ENCODE measurements at regions of chr19 and their contacts with region 1.

Region 1: DNA sequence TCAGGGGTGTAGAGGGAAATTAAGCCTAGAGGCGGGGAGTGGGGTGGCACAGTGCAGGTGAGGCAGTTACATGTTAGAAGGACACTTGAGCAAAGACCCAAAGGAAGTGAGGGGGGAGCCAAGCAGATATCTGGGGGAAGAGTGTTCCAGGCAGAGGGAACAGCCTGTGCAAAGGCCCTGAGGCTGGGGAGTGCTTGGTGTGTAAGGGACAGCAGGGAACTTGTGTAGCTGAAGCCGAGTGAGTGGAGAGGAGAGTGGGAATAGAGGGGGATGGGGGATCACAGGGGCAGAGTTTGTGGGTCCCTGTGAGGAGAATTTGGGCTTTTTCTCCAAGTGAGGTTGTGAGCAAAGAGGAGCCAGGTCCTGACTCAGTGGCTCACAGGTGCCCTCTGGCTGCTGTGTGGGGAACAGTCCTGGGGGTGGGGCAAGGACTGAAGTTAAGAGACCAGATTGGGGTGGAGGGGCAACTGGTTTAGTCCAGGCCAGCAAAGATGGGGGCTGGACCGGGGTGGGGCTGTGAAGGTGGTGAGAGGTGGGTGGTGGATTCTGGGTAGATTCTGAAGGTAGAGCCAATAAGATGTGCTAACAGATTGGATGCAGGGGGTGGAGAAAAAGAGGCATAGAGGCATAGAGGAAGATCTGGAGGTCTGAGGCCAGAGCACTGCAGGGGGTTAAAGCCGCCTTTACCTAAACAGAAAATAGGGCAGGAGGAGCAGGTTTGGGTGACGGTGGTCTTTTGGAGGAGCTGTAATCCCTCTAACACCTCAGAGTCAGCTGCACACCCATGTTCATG is 75.3 kb downstream of the CACNA1A start:
- DNase-seq: peak; percentile 51
- ATAC-seq: peak; percentile 93
- H3K4me3 ChIP-seq: no peak overlapping the region
- H3K27ac ChIP-seq: no peak overlapping the region
- H3K4me1 ChIP-seq: no peaks in the 10 kb centered on the region; a peak in 1 of 4 replicates
- H3K27me3 ChIP-seq: no peaks in the 10 kb centered on the region
- CTCF ChIP-seq: peak; percentile 84 to 96 (median 93)
- POLR2A ChIP-seq: no peak
- RAD21 ChIP-seq: peak; percentile 88

Region 2: GRCh38 chr19:13366529-13367143 is 64.3 kb before region 1 on chr19:
- CTCF ChIA-PET with region 1: interaction called, 3 read pairs
- POLR2A ChIA-PET with region 1: no interaction called
- RAD21 ChIA-PET with region 1: no interaction called
- intact Hi-C with region 1: loop called (anchors 1 kb)
- DNase-seq: peak; percentile 51
- ATAC-seq: peak; percentile 87
- H3K4me3 ChIP-seq: no peak overlapping the region
- H3K27ac ChIP-seq: no peak overlapping the region
- H3K4me1 ChIP-seq: peaks cover 0 to 6% of the 10 kb centered on the region in 2 experiments; a peak in 1 of 4 replicates
- H3K27me3 ChIP-seq: no peaks in the 10 kb centered on the region
- CTCF ChIP-seq: peak; percentile 64 to 93 (median 75)
- POLR2A ChIP-seq: no peak
- RAD21 ChIP-seq: peak; percentile 95

Region 3: GRCh38 chr19:13451434-13451995 is 20.5 kb after region 1 on chr19:
- CTCF ChIA-PET with region 1: no interaction called
- POLR2A ChIA-PET with region 1: no interaction called
- RAD21 ChIA-PET with region 1: no interaction called
- intact Hi-C with region 1: no loop called
- DNase-seq: no peak
- ATAC-seq: no peak
- H3K4me3 ChIP-seq: no peak overlapping the region
- H3K27ac ChIP-seq: no peak overlapping the region
- H3K4me1 ChIP-seq: no peaks in the 10 kb centered on the region
- H3K27me3 ChIP-seq: peaks cover 15% of the 10 kb centered on the region
- CTCF ChIP-seq: no peak
- POLR2A ChIP-seq: no peak
- RAD21 ChIP-seq: no peak

Measured in HCT116 (cell line).